SK-N-SH (cell line): ENCODE measurements at regions of chr3 and their contacts with region 1.

Region 1: DNA sequence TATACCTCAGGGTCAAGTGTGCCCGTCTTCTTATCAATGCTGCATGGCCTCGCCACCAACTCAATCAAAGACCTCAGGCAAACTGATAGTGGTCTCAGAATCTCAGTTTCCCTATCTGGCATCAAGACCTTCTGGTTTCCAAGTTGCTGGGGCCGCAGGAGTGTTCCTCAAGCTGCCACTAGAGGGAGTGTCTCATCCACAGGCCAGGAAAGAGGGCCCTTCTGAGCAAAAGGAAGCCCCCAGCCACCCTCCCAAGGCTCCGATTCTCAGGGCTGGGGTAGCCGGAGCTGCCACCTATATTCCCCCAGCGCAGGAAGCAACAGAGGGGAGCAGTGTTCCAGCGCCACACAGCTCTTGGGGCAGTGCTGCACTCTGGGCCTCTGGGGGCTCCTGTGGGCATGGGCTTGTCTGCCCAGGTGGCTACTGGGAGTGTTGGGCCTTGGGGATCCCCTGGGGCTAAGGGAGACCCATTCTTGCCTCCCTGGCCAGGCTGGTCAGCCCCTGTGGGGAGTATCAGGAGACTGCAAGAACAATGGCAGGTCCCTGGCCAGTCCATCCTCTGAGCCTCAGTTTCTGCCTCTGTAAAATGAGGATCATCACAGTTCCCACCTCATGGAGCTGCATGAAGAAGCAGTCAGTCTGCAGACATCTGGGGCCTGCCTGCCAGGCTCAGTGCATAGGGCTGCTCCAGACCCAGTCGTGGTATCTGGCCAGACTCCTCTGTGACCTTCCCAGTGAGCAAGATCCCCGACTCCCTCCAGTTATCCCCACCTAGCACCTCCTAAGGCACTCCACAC is 23.4 kb upstream of the SEC13 start:
- DNase-seq: peak; percentile 86
- H3K4me3 ChIP-seq: no peak overlapping the region; a peak in 1 of 4 replicates
- H3K27ac ChIP-seq: no peak overlapping the region
- H3K4me1 ChIP-seq: peaks cover 0 to 3% of the 10 kb centered on the region in 2 experiments; a peak in 1 of 4 replicates
- H3K27me3 ChIP-seq: no peaks in the 10 kb centered on the region
- CTCF ChIP-seq: peak; percentile 96
- EP300 ChIP-seq: no peak
- RAD21 ChIP-seq: peak; percentile 84

Region 2: GRCh38 chr3:10357592-10358308 is 13.4 kb after region 1 on chr3:
- CTCF ChIA-PET with region 1: interaction called, 35 read pairs
- POLR2A ChIA-PET with region 1: no interaction called
- DNase-seq: no peak
- H3K4me3 ChIP-seq: no peak overlapping the region
- H3K27ac ChIP-seq: peak overlapping the region in 1 of 2 experiments; percentile 91; a peak in 2 of 4 replicates
- H3K4me1 ChIP-seq: peaks cover 8 to 47% of the 10 kb centered on the region in 2 experiments; a peak in 3 of 4 replicates
- H3K27me3 ChIP-seq: peaks cover 5% of the 10 kb centered on the region
- CTCF ChIP-seq: no peak
- EP300 ChIP-seq: no peak
- RAD21 ChIP-seq: no peak

Region 3: GRCh38 chr3:10370429-10370828 is 26.1 kb after region 1 on chr3:
- CTCF ChIA-PET with region 1: interaction called, 12 read pairs
- POLR2A ChIA-PET with region 1: no interaction called
- DNase-seq: peak; percentile 46
- H3K4me3 ChIP-seq: no peak overlapping the region
- H3K27ac ChIP-seq: no peak overlapping the region
- H3K4me1 ChIP-seq: peaks cover 0 to 11% of the 10 kb centered on the region in 2 experiments; a peak in 2 of 4 replicates
- H3K27me3 ChIP-seq: no peaks in the 10 kb centered on the region; the same call in 1 of the 2 replicates
- CTCF ChIP-seq: no peak
- EP300 ChIP-seq: no peak
- RAD21 ChIP-seq: no peak

Region 4: DNA sequence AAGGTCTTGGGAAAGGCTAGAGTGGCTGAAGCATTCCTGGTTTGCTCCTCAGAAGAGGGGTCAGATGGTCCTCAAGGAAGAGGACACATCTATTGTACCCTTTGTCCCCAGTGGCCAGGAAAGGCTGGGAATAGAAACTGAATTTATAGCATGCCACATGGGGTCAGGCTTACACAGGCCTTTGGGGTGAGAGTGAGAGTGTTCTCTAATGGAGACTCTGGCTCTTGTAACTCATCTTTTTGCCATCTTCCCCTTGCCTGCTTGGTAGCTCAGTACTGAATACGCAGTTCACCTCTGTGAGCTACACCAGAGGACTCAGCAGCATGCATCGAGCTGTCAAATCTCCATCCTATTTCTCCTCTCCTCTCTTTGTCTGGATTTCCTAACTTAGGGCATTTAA is 73.5 kb after region 1 on chr3:
- CTCF ChIA-PET with region 1: interaction called, 11 read pairs
- POLR2A ChIA-PET with region 1: no interaction called
- DNase-seq: peak; percentile 78
- H3K4me3 ChIP-seq: no peak overlapping the region
- H3K27ac ChIP-seq: no peak overlapping the region
- H3K4me1 ChIP-seq: no peaks in the 10 kb centered on the region
- H3K27me3 ChIP-seq: no peaks in the 10 kb centered on the region; the same call in 1 of the 2 replicates
- CTCF ChIP-seq: peak; percentile 32
- EP300 ChIP-seq: no peak
- RAD21 ChIP-seq: peak; percentile 91

Region 5: DNA sequence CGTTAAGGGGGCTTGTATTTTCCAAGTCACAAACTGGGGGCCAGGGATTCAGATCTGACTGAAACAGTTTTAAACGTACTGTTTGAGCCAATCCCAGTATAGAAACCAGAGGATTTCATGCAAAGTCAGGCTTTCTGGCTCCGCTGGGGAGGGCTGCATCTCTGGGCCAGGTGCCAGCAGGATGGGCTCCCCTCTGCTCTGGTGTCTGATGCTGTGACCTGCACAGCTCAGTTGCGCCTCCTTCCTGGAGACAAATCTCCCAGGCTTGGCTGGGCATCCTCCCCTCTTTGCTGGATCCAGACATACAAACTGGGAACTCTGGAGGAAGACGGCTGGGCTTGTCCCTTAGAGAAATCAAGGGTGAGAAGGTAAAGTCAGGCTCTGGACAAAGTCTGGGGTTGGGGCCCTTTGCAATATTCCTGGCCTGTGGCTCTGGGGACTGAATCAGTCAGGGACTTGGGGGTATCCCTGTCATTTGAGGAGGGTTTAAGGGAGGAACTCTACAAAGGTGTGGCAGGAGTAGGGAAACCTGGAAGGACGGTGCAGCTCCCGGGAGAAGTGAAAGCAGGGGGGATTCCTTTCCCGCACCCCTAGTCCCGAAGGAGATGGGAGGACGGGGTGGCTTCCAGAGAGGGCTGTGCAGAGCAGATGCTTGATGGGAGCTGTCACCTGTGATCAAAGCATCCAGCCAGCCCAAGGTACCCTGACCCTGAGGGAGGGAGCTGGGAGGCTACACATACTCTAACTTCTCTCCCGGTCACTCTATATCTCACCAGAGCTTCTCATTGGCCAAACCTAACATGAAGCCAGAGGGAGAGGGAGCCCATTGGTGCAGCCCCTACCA is 275.9 kb after region 1 on chr3:
- CTCF ChIA-PET with region 1: interaction called, 11 read pairs
- POLR2A ChIA-PET with region 1: no interaction called
- DNase-seq: peak; percentile 73
- H3K4me3 ChIP-seq: no peak overlapping the region
- H3K27ac ChIP-seq: no peak overlapping the region
- H3K4me1 ChIP-seq: peaks cover 0 to 9% of the 10 kb centered on the region in 2 experiments; a peak in 1 of 4 replicates
- H3K27me3 ChIP-seq: no peaks in the 10 kb centered on the region
- CTCF ChIP-seq: no peak
- EP300 ChIP-seq: no peak
- RAD21 ChIP-seq: peak; percentile 63

Region 6: GRCh38 chr3:10703875-10704274 is 359.5 kb after region 1 on chr3:
- CTCF ChIA-PET with region 1: interaction called, 13 read pairs
- POLR2A ChIA-PET with region 1: no interaction called
- DNase-seq: peak; percentile 46
- H3K4me3 ChIP-seq: peak overlapping the region in 1 of 2 experiments; percentile 29; a peak in 1 of 4 replicates
- H3K27ac ChIP-seq: no peak overlapping the region
- H3K4me1 ChIP-seq: peaks cover 0 to 8% of the 10 kb centered on the region in 2 experiments; a peak in 1 of 4 replicates
- H3K27me3 ChIP-seq: peaks cover 18% of the 10 kb centered on the region; the same call in 1 of the 2 replicates
- CTCF ChIP-seq: peak; percentile 41; the same call in 1 of the 2 replicates
- EP300 ChIP-seq: no peak
- RAD21 ChIP-seq: peak; percentile 62